ENCODE measurements at regions of chr11 and their contacts with region 1.

Region 1: GRCh38 chr11:93498641-93499040 is 44.5 kb downstream of the SMCO4 start:
- DNase-seq: no peak
- ATAC-seq: no peak
- H3K4me3 ChIP-seq: no peak overlapping the region
- H3K27ac ChIP-seq: no peak overlapping the region
- H3K4me1 ChIP-seq: peaks cover 0 to 6% (median 4%) of the 10 kb centered on the region in 3 donors
- H3K27me3 ChIP-seq: no peaks in the 10 kb centered on the region
- CTCF ChIP-seq: no peak

Region 2: DNA sequence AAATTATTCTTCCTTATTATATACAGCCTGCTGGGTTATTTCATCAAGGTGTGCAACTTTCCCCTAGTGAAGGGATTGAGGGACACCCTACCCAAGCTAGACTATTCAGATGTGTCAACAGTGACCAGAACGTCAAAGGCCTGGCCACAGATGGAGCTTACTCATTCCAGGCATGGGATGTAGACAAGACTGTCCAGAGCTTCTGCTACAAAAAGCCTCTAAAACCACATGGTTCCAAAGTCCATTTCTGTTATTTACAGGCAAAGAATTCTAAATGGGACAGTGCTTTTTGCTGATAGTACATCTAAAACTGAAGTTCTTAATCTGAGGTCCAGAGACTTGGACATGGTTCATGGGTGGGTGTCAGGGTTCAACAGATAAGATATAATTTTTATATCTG is 54.2 kb after region 1 on chr11:
- intact Hi-C with region 1: loop called in 1 of 3 experiments (anchors 10 kb)
- DNase-seq: no peak
- ATAC-seq: no peak
- H3K4me3 ChIP-seq: no peak overlapping the region
- H3K27ac ChIP-seq: no peak overlapping the region
- H3K4me1 ChIP-seq: no peaks in the 10 kb centered on the region
- H3K27me3 ChIP-seq: no peaks in the 10 kb centered on the region
- CTCF ChIP-seq: no peak

Measured in pancreas (tissue), 10 donors.